WTC11 (cell line): ENCODE measurements at regions of chrX and their contacts with region 1.

Region 1: DNA sequence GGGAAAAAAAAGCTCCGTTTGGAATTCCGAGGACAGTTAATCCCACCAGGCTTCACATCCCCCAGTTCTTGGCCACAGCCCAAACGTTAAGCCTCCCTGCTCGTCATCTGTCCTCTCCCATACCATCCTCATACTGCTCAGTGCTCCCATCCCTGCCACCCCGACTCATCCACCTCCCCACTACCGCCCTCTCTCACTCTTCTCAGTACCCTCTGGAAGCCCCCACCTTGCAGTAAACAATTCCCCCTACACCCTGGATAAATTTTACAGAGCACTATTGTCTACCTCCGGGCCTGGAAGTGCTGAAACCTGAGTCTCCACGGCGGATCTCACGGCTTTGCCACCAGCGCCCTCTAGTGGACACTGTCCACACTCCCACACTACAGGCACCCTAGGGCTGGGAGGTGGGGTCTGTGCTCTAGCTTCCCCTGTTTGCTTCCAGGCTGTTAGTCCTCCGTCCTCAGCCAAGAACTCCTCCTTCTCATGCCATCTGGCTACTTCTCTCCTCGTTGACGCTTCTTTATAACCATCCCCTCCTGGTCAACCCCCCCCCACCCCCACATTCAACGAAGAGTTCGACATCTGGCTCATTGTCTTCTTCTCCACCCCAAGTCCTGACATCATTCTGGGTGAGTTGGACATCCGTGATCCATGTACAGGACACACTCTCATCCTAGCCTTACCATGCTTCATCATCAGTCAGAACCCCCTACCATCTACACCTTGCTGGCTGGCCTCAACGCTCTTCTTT is 54.5 kb downstream of the RTL9 start:
- DNase-seq: peak; percentile 73
- ATAC-seq: peak; percentile 96
- H3K4me3 Mint-ChIP-seq: peak overlapping the region; percentile 44
- H3K27ac Mint-ChIP-seq: no peak overlapping the region
- H3K4me1 Mint-ChIP-seq: peaks cover 12% of the 10 kb centered on the region
- H3K27me3 Mint-ChIP-seq: peaks cover 4% of the 10 kb centered on the region
- CTCF ChIP-seq: peak; percentile 75

Region 2: GRCh38 chrX:110146521-110146920 is 266.6 kb before region 1 on chrX:
- CTCF ChIA-PET with region 1: interaction called, 32 read pairs
- POLR2A ChIA-PET with region 1: no interaction called
- DNase-seq: peak; percentile 12
- ATAC-seq: peak; percentile 63
- H3K4me3 Mint-ChIP-seq: no peak overlapping the region
- H3K27ac Mint-ChIP-seq: no peak overlapping the region
- H3K4me1 Mint-ChIP-seq: peaks cover 13% of the 10 kb centered on the region
- H3K27me3 Mint-ChIP-seq: no peaks in the 10 kb centered on the region
- CTCF ChIP-seq: no peak

Region 3: GRCh38 chrX:110425222-110426154 is 12.3 kb after region 1 on chrX:
- CTCF ChIA-PET with region 1: interaction called, 11 read pairs
- POLR2A ChIA-PET with region 1: no interaction called
- DNase-seq: no peak
- ATAC-seq: peak; percentile 87
- H3K4me3 Mint-ChIP-seq: no peak overlapping the region
- H3K27ac Mint-ChIP-seq: no peak overlapping the region
- H3K4me1 Mint-ChIP-seq: peaks cover 20% of the 10 kb centered on the region
- H3K27me3 Mint-ChIP-seq: peaks cover 29% of the 10 kb centered on the region
- CTCF ChIP-seq: no peak

Region 4: DNA sequence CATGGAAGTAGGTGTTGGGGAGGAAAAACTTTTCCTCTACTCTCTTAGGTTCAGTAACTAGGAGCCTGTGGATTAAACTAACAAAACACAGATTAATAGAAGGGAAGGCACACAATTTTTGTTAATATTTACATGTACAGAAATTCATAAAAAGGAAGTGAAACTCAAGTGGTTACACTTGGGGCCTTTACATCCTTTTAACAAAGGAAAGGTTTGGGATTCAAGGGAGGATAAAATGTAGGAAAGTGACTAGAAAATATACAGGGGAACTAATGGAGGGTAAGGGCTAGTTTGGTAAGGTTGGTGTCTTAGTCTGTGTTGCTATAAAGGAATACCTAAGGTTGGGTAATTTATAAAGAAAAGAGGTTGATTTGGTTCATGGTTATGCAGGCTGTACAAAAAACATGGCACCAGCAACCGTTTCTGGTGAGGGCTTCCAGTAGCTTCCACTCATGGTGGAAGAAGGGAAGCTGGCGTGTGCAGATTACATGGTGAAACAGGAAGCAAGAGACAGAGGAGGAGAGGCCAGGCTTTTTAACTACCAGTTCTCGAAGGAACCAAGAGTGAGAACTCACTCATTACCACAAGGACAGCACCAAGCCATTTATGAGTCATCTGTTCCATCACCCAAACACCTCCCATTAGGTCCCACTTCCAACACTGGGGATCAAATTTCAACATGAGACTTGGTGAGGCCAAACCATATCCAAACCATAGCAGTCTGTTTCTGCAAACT is 258.1 kb after region 1 on chrX:
- CTCF ChIA-PET with region 1: no interaction called
- POLR2A ChIA-PET with region 1: no interaction called
- DNase-seq: no peak
- ATAC-seq: no peak
- H3K4me3 Mint-ChIP-seq: no peak overlapping the region
- H3K27ac Mint-ChIP-seq: no peak overlapping the region
- H3K4me1 Mint-ChIP-seq: peaks cover 17% of the 10 kb centered on the region
- H3K27me3 Mint-ChIP-seq: no peaks in the 10 kb centered on the region; the same call in 1 of the 2 replicates
- CTCF ChIP-seq: no peak